ENCODE measurements at regions of chr17 and their contacts with region 1.

Region 1: DNA sequence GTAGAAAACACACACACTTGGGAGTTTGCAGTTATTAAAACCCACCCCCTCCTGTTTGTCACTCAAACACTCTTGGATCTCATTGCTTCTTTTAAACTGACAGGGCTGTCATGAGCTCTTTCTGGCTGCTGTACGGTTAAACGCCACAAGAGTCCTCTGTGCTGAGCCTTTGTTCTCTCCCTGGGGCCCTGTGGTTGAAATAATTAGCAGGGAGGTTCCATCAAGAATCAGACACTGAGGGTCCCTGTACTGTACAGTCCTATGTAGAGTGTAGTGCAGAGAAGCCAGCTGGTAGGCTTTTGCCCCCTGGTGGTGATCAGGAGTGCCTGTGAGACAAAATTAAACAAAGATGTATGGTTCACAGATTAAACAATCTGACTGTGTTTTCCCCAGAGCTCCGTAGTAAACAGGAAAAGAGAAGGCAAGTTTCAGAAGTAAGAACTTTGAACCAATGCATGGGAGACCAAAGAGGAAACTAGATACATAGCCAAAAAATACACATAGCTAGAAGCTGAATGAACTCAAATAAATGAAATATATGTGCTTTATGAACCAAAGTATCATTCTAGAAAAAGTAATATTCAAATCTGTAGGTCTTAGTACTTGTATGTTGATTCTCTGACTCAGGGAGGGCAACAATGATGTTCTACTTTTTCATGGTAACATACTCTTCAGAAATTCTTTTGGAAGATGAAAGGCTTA is 1.4 kb upstream of the SSH2 start:
- DNase-seq: peak; percentile 90
- ATAC-seq: peak; percentile 86
- H3K4me3 ChIP-seq: peak overlapping the region; percentile 96; the same call in 1 of the 2 replicates
- H3K27ac ChIP-seq: no peak overlapping the region
- H3K4me1 ChIP-seq: peaks cover 4% of the 10 kb centered on the region
- H3K27me3 ChIP-seq: no peaks in the 10 kb centered on the region
- CTCF ChIP-seq: peak; percentile 83 to 95 (median 94); a peak in 5 of 6 replicates
- EP300 ChIP-seq: peak; percentile 19 to 43; a peak in 2 of 4 replicates
- POLR2A ChIP-seq: no peak
- RAD21 ChIP-seq: peak; percentile 93

Region 2: GRCh38 chr17:29722411-29723198 is 208.8 kb before region 1 on chr17:
- CTCF ChIA-PET with region 1: interaction called, 10 read pairs
- POLR2A ChIA-PET with region 1: interaction called, 15 read pairs
- RAD21 ChIA-PET with region 1: interaction called, 20 read pairs
- SMC1A ChIA-PET with region 1: interaction called, 28 read pairs
- in situ Hi-C with region 1: no loop called
- intact Hi-C with region 1: no loop called
- DNase-seq: peak; percentile 96
- ATAC-seq: peak; percentile 86
- H3K4me3 ChIP-seq: peak overlapping the region; percentile 53; the same call in 1 of the 2 replicates
- H3K27ac ChIP-seq: peak overlapping the region; percentile 94
- H3K4me1 ChIP-seq: peaks cover 62% of the 10 kb centered on the region
- H3K27me3 ChIP-seq: no peaks in the 10 kb centered on the region
- CTCF ChIP-seq: no peak
- EP300 ChIP-seq: peak; percentile 33 to 67; a peak in 3 of 4 replicates
- POLR2A ChIP-seq: peak; percentile 65
- RAD21 ChIP-seq: no peak; the same call in 1 of the 2 replicates

Region 3: GRCh38 chr17:29802246-29802645 is 129.1 kb before region 1 on chr17:
- CTCF ChIA-PET with region 1: interaction called, 454 read pairs
- POLR2A ChIA-PET with region 1: interaction called, 87 read pairs
- RAD21 ChIA-PET with region 1: interaction called, 300 read pairs
- SMC1A ChIA-PET with region 1: interaction called, 271 read pairs
- in situ Hi-C with region 1: loop called (anchors 5 kb)
- intact Hi-C with region 1: loop called (anchors 1 kb)
- DNase-seq: no peak
- ATAC-seq: no peak
- H3K4me3 ChIP-seq: no peak overlapping the region
- H3K27ac ChIP-seq: no peak overlapping the region
- H3K4me1 ChIP-seq: no peaks in the 10 kb centered on the region
- H3K27me3 ChIP-seq: no peaks in the 10 kb centered on the region
- CTCF ChIP-seq: no peak
- EP300 ChIP-seq: no peak
- POLR2A ChIP-seq: no peak
- RAD21 ChIP-seq: no peak

Region 4: GRCh38 chr17:29838961-29839360 is 92.4 kb before region 1 on chr17:
- CTCF ChIA-PET with region 1: interaction called, 19 read pairs
- POLR2A ChIA-PET with region 1: no interaction called
- RAD21 ChIA-PET with region 1: interaction called, 8 read pairs
- SMC1A ChIA-PET with region 1: interaction called, 18 read pairs
- in situ Hi-C with region 1: no loop called
- intact Hi-C with region 1: no loop called
- DNase-seq: no peak
- ATAC-seq: no peak
- H3K4me3 ChIP-seq: no peak overlapping the region
- H3K27ac ChIP-seq: no peak overlapping the region
- H3K4me1 ChIP-seq: no peaks in the 10 kb centered on the region
- H3K27me3 ChIP-seq: no peaks in the 10 kb centered on the region
- CTCF ChIP-seq: no peak
- EP300 ChIP-seq: no peak
- POLR2A ChIP-seq: no peak
- RAD21 ChIP-seq: no peak

Region 5: GRCh38 chr17:29909236-29910003 is 22.0 kb before region 1 on chr17:
- CTCF ChIA-PET with region 1: interaction called, 12 read pairs
- POLR2A ChIA-PET with region 1: interaction called, 7 read pairs
- RAD21 ChIA-PET with region 1: interaction called, 12 read pairs
- SMC1A ChIA-PET with region 1: interaction called, 10 read pairs
- in situ Hi-C with region 1: no loop called
- intact Hi-C with region 1: no loop called
- DNase-seq: no peak
- ATAC-seq: peak; percentile 46; the same call in 2 of the 3 replicates
- H3K4me3 ChIP-seq: no peak overlapping the region
- H3K27ac ChIP-seq: no peak overlapping the region
- H3K4me1 ChIP-seq: no peaks in the 10 kb centered on the region
- H3K27me3 ChIP-seq: no peaks in the 10 kb centered on the region
- CTCF ChIP-seq: no peak
- EP300 ChIP-seq: no peak
- POLR2A ChIP-seq: no peak
- RAD21 ChIP-seq: no peak

Region 6: GRCh38 chr17:29968271-29968670 is 36.9 kb after region 1 on chr17:
- CTCF ChIA-PET with region 1: no interaction called
- POLR2A ChIA-PET with region 1: no interaction called
- RAD21 ChIA-PET with region 1: no interaction called
- SMC1A ChIA-PET with region 1: no interaction called
- in situ Hi-C with region 1: no loop called
- intact Hi-C with region 1: no loop called
- DNase-seq: no peak
- ATAC-seq: no peak
- H3K4me3 ChIP-seq: no peak overlapping the region
- H3K27ac ChIP-seq: no peak overlapping the region
- H3K4me1 ChIP-seq: no peaks in the 10 kb centered on the region
- H3K27me3 ChIP-seq: no peaks in the 10 kb centered on the region
- CTCF ChIP-seq: no peak
- EP300 ChIP-seq: no peak
- POLR2A ChIP-seq: no peak
- RAD21 ChIP-seq: no peak

Region 7: DNA sequence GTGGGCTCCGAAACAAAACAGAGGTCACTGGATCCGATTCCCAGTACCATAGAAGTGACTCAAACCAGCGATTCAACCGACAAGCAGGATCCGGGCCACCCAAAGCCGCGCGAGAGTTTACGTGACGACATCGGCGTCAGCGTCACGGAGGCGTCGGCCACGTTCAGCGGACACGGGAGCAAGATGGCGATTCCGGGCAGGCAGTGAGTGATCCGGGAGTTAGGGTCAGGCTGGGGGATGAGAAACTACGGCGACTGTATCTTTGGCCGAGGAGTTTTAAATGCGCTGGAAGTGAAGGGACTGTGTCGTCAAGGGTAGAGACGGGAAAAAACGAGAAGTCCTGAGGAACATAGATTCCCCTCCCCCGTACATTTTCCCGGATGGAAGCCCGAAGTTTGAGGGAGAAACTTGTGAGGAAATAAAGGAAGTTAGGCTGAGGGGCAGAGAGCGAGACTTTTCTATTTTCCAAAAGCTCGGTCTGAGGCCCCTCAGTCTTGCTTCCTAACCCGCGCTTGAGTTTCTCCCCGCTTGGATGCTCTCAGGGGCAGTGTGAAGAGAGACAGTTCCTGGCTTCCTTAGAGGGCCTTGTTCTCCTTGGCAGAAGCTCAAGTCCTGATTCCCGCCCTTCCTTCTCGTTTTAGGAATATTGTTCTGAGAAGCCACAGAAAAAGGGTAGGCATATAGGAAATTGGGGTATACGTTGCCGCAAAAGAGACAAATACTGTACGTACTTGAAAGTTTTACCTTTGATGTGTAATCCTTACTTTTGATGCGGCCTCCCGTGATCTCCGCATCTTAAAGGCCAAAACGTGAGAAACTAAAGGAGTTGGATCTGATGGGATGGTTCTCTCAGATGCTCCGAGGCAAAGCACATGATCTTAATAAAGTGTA is 185.5 kb after region 1 on chr17 and contains the start of gene NSRP1:
- CTCF ChIA-PET with region 1: no interaction called
- POLR2A ChIA-PET with region 1: no interaction called
- RAD21 ChIA-PET with region 1: interaction called, 11 read pairs
- SMC1A ChIA-PET with region 1: interaction called, 9 read pairs
- in situ Hi-C with region 1: no loop called
- intact Hi-C with region 1: no loop called
- DNase-seq: peak; percentile 89
- ATAC-seq: peak; percentile 91
- H3K4me3 ChIP-seq: peak within 1 kb of the TSS; percentile 95
- H3K27ac ChIP-seq: peak within 1 kb of the TSS; percentile 94
- H3K4me1 ChIP-seq: peaks cover 9% of the 10 kb centered on the region
- H3K27me3 ChIP-seq: no peaks in the 10 kb centered on the region
- CTCF ChIP-seq: no peak
- EP300 ChIP-seq: no peak
- POLR2A ChIP-seq: peak; percentile 100
- RAD21 ChIP-seq: no peak
- polyA plus RNA-seq, gene NSRP1: 57.2 to 69.7 TPM

Measured in GM12878 (cell line).